HCT116 (cell line): ENCODE measurements at regions of chr5 and their contacts with region 1.

Region 1: GRCh38 chr5:140753561-140753960 is 32.4 kb upstream of the PCDHA1 start:
- DNase-seq: no peak
- ATAC-seq: no peak
- H3K4me3 ChIP-seq: no peak overlapping the region
- H3K27ac ChIP-seq: no peak overlapping the region
- H3K4me1 ChIP-seq: no peaks in the 10 kb centered on the region
- H3K27me3 ChIP-seq: no peaks in the 10 kb centered on the region
- CTCF ChIP-seq: no peak
- POLR2A ChIP-seq: no peak
- RAD21 ChIP-seq: no peak

Region 2: GRCh38 chr5:140785905-140786686 is 32.5 kb after region 1 on chr5 and contains the start of gene PCDHA1:
- CTCF ChIA-PET with region 1: no interaction called
- POLR2A ChIA-PET with region 1: no interaction called
- RAD21 ChIA-PET with region 1: no interaction called
- intact Hi-C with region 1: loop called (anchors 5 kb)
- DNase-seq: no peak
- ATAC-seq: no peak
- H3K4me3 ChIP-seq: no peak within 1 kb of the TSS
- H3K27ac ChIP-seq: no peak within 1 kb of the TSS
- H3K4me1 ChIP-seq: no peaks in the 10 kb centered on the region
- H3K27me3 ChIP-seq: no peaks in the 10 kb centered on the region
- CTCF ChIP-seq: peak in 2 of 3 experiments; percentile 5 to 38; a peak in 1 of 6 replicates
- POLR2A ChIP-seq: no peak
- RAD21 ChIP-seq: peak; percentile 38
- total RNA-seq, gene PCDHA1: not detected